ENCODE measurements at regions of chr7 and their contacts with region 1.

Region 1: GRCh38 chr7:81462672-81463071 is 307.2 kb downstream of the HGF start:
- DNase-seq: no peak

Region 2: DNA sequence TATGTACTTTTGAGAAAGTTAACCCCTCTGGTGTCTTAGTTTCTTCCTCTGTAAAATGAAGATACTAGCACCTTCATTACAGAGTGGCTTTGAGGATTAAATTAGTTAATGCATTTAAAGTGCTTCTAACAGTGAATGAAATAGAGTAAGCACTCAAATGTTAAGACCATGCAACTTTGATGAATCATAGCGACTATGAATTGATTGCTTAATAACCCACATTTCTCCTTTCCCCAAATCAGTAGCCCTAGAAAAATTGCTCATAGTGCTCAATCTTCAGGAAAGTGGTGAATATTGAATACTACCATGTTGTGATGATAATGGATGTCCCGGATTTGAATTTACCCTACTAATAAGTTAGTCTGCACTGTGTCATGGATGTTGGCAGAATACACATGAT is 776.1 kb before region 1 on chr7:
- intact Hi-C with region 1: loop called (anchors 5 kb)
- DNase-seq: no peak

Measured in head of caudate nucleus (tissue), 42 donors.